A673 (cell line): ENCODE measurements at regions of chr17 and their contacts with region 1.

Region 1: GRCh38 chr17:78341559-78342448 is 18.1 kb downstream of the SOCS3 start:
- DNase-seq: no peak
- H3K4me3 ChIP-seq: peak overlapping the region; percentile 38
- H3K27ac ChIP-seq: no peak overlapping the region
- H3K4me1 ChIP-seq: peaks cover 12% of the 10 kb centered on the region
- H3K27me3 ChIP-seq: no peaks in the 10 kb centered on the region
- CTCF ChIP-seq: no peak

Region 2: GRCh38 chr17:77654821-77655220 is 687.0 kb before region 1 on chr17:
- CTCF ChIA-PET with region 1: no interaction called
- POLR2A ChIA-PET with region 1: interaction called, 11 read pairs
- intact Hi-C with region 1: no loop called
- DNase-seq: no peak
- H3K4me3 ChIP-seq: no peak overlapping the region
- H3K27ac ChIP-seq: no peak overlapping the region
- H3K4me1 ChIP-seq: no peaks in the 10 kb centered on the region
- H3K27me3 ChIP-seq: no peaks in the 10 kb centered on the region
- CTCF ChIP-seq: no peak

Region 3: GRCh38 chr17:78127239-78128085 is 214.3 kb before region 1 on chr17:
- CTCF ChIA-PET with region 1: no interaction called
- POLR2A ChIA-PET with region 1: no interaction called
- intact Hi-C with region 1: no loop called
- DNase-seq: no peak
- H3K4me3 ChIP-seq: peak overlapping the region; percentile 80
- H3K27ac ChIP-seq: no peak overlapping the region
- H3K4me1 ChIP-seq: peaks cover 46% of the 10 kb centered on the region
- H3K27me3 ChIP-seq: no peaks in the 10 kb centered on the region
- CTCF ChIP-seq: no peak